ENCODE measurements at regions of chr1 and their contacts with region 1.

Region 1: GRCh38 chr1:119286587-119287181 is 81.9 kb upstream of the HAO2 start:
- DNase-seq: peak; percentile 64 to 71
- H3K4me3 ChIP-seq: no peak overlapping the region
- H3K4me1 ChIP-seq: no peaks in the 10 kb centered on the region
- H3K27me3 ChIP-seq: 0 out of 2 replicates have a peak, but pooled peaks cover 3% of the 10 kb centered on the region

Region 2: GRCh38 chr1:119367427-119368124 is 80.9 kb after region 1 on chr1:
- in situ Hi-C with region 1: loop called (anchors 10 kb)
- DNase-seq: peak in 1 of 2 experiments; percentile 38
- H3K4me3 ChIP-seq: no peak overlapping the region
- H3K4me1 ChIP-seq: peaks cover 14% of the 10 kb centered on the region
- H3K27me3 ChIP-seq: peaks cover 11% of the 10 kb centered on the region